HepG2 (cell line): ENCODE measurements at regions of chr4 and their contacts with region 1.

Region 1: GRCh38 chr4:74189331-74190043 is 31.6 kb downstream of the MTHFD2L start:
- DNase-seq: peak; percentile 64
- ATAC-seq: peak; percentile 35; the same call in 2 of the 3 replicates
- H3K4me3 ChIP-seq: no peak overlapping the region
- H3K27ac ChIP-seq: no peak overlapping the region
- H3K4me1 ChIP-seq: peaks cover 25% of the 10 kb centered on the region
- H3K27me3 ChIP-seq: peaks cover 0 to 9% of the 10 kb centered on the region in 2 experiments; a peak in 1 of 5 replicates
- CTCF ChIP-seq: peak; percentile 61
- EP300 ChIP-seq: no peak
- POLR2A ChIP-seq: no peak
- RAD21 ChIP-seq: no peak

Region 2: GRCh38 chr4:74202062-74202586 is 12.6 kb after region 1 on chr4:
- CTCF ChIA-PET with region 1: interaction called, 3 read pairs
- POLR2A ChIA-PET with region 1: interaction called, 4 read pairs
- in situ Hi-C with region 1: no loop called
- intact Hi-C with region 1: loop called (anchors 1 kb)
- DNase-seq: peak; percentile 98
- ATAC-seq: peak; percentile 98
- H3K4me3 ChIP-seq: no peak overlapping the region
- H3K27ac ChIP-seq: no peak overlapping the region
- H3K4me1 ChIP-seq: peaks cover 20% of the 10 kb centered on the region
- H3K27me3 ChIP-seq: peaks cover 0 to 17% of the 10 kb centered on the region in 2 experiments; a peak in 3 of 5 replicates
- CTCF ChIP-seq: no peak
- EP300 ChIP-seq: peak; percentile 58 to 90; a peak in 3 of 4 replicates
- POLR2A ChIP-seq: no peak
- RAD21 ChIP-seq: no peak

Region 3: GRCh38 chr4:74228691-74229640 is 39.5 kb after region 1 on chr4:
- CTCF ChIA-PET with region 1: interaction called, 22 read pairs
- POLR2A ChIA-PET with region 1: no interaction called
- in situ Hi-C with region 1: no loop called
- intact Hi-C with region 1: loop called (anchors 1 kb)
- DNase-seq: peak; percentile 58
- ATAC-seq: peak; percentile 90
- H3K4me3 ChIP-seq: no peak overlapping the region
- H3K27ac ChIP-seq: no peak overlapping the region
- H3K4me1 ChIP-seq: no peaks in the 10 kb centered on the region
- H3K27me3 ChIP-seq: no peaks in the 10 kb centered on the region
- CTCF ChIP-seq: peak; percentile 74
- EP300 ChIP-seq: no peak
- POLR2A ChIP-seq: no peak
- RAD21 ChIP-seq: no peak

Region 4: DNA sequence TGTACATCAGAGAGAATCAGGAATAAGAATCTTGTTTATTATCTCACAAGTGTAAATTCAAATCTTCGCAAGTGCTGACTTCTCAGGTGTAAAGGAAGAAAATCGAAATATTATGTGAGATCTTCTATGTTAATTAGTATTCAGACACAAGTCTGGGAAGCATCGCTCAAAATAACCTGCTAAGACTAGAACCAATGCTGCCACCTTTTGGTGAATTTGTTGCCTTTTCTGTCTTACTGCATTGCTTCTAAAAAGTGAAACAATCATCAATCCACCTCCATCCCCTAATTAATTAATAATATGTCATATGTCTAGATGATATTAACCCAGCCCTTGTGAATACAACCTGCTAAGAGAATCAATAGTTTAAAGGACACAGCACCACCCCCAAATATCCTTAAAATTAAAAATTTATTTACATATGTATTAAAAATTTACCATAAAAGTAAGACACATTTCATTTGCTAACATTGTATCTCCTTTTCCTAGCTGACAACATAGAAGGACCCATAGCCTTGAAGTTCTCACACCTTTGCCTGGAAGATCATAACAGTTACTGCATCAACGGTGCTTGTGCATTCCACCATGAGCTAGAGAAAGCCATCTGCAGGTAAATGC is 122.3 kb after region 1 on chr4:
- CTCF ChIA-PET with region 1: interaction called, 20 read pairs
- POLR2A ChIA-PET with region 1: no interaction called
- in situ Hi-C with region 1: loop called (anchors 5 kb)
- intact Hi-C with region 1: loop called (anchors 1 kb)
- DNase-seq: peak; percentile 46
- ATAC-seq: peak; percentile 60; the same call in 2 of the 3 replicates
- H3K4me3 ChIP-seq: no peak overlapping the region
- H3K27ac ChIP-seq: no peak overlapping the region
- H3K4me1 ChIP-seq: no peaks in the 10 kb centered on the region
- H3K27me3 ChIP-seq: no peaks in the 10 kb centered on the region
- CTCF ChIP-seq: peak; percentile 66
- EP300 ChIP-seq: no peak
- POLR2A ChIP-seq: no peak
- RAD21 ChIP-seq: 0 out of 2 replicates have a peak, but pooled peaks have one; percentile 24

Region 5: DNA sequence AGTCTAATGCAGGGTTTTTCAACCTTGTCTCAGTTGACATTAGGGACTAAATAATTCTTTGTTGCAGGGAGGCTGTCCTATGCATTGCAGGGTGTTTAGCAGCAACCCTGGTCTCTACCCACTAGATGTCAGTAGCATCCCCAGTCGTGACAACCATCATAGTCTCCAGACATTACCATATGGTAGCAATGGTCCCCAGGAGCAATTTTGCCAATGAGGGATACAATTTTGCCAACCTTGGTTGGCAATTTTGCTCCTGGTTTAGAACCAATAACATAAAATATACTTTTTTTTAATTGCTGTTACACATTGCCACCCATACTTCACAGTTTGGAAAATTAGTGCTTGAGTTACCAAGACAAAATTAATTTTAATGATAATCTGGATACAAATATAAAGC is 181.4 kb after region 1 on chr4:
- CTCF ChIA-PET with region 1: no interaction called
- POLR2A ChIA-PET with region 1: no interaction called
- in situ Hi-C with region 1: no loop called
- intact Hi-C with region 1: loop called (anchors 5 kb)
- DNase-seq: peak; percentile 65
- ATAC-seq: peak; percentile 99
- H3K4me3 ChIP-seq: no peak overlapping the region
- H3K27ac ChIP-seq: no peak overlapping the region
- H3K4me1 ChIP-seq: no peaks in the 10 kb centered on the region
- H3K27me3 ChIP-seq: 0 out of 5 replicates have a peak, but pooled peaks cover 0 to 3% of the 10 kb centered on the region in 2 experiments
- CTCF ChIP-seq: peak; percentile 74
- EP300 ChIP-seq: no peak
- POLR2A ChIP-seq: no peak
- RAD21 ChIP-seq: peak; percentile 66

Region 6: GRCh38 chr4:74659576-74660411 is 470.3 kb after region 1 on chr4:
- CTCF ChIA-PET with region 1: no interaction called
- POLR2A ChIA-PET with region 1: no interaction called
- in situ Hi-C with region 1: loop called (anchors 10 kb)
- intact Hi-C with region 1: no loop called
- DNase-seq: peak; percentile 92
- ATAC-seq: peak; percentile 71
- H3K4me3 ChIP-seq: no peak overlapping the region
- H3K27ac ChIP-seq: peak overlapping the region; percentile 69
- H3K4me1 ChIP-seq: peaks cover 77% of the 10 kb centered on the region
- H3K27me3 ChIP-seq: no peaks in the 10 kb centered on the region
- CTCF ChIP-seq: no peak
- EP300 ChIP-seq: peak in 1 of 2 experiments; percentile 97; a peak in 2 of 4 replicates
- POLR2A ChIP-seq: no peak
- RAD21 ChIP-seq: no peak